ENCODE measurements at regions of chr5 and their contacts with region 1.

Region 1: DNA sequence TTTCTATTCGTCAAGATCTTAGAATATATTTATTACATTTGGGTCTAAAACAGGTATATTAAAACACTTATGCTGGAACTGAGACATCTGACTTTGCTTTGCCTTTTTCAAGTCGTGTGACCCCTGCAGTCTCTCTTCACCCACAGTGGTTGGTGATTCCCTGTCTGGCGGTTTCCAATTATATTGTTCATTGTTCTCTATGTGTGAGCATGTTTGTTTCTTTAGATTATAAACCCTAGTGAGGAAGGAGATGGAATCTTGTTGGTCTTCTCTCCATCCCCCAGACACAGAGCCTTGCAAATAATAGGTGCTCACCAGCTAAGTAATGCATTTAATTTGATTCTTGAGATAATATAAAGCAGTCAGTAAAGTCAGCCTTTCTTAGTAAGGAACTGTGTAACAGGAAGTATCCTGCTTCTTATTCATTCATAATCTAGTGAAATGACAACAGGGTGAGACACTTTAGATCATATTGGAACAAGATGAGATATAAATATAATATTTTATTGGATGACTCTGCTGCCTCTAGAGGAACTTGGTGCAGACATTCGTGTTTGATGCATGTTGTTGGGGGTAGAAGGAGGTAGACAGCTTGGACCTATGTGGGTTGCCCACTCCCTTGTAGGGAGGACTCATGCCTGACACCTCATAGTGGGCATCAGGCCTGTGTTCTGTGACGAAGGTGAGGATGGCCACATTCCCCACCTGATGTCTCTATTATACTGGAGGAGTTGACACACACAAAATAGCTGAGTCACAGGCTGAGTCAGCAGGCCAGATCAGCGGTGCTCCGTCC is 88.1 kb downstream of the FGF1 start:
- DNase-seq: no peak
- ATAC-seq: no peak
- H3K4me3 ChIP-seq: no peak overlapping the region
- H3K27ac ChIP-seq: no peak overlapping the region
- H3K4me1 ChIP-seq: no peaks in the 10 kb centered on the region
- H3K27me3 ChIP-seq: no peaks in the 10 kb centered on the region; a peak in 2 of 4 replicates
- CTCF ChIP-seq: no peak
- EP300 ChIP-seq: no peak
- POLR2A ChIP-seq: no peak
- RAD21 ChIP-seq: no peak

Region 2: GRCh38 chr5:142587354-142587965 is 10.3 kb before region 1 on chr5:
- CTCF ChIA-PET with region 1: interaction called, 20 read pairs
- POLR2A ChIA-PET with region 1: no interaction called
- RAD21 ChIA-PET with region 1: no interaction called
- SMC1A ChIA-PET with region 1: interaction called, 4 read pairs
- in situ Hi-C with region 1: no loop called
- intact Hi-C with region 1: no loop called
- DNase-seq: no peak
- ATAC-seq: no peak; the same call in 2 of the 3 replicates
- H3K4me3 ChIP-seq: no peak overlapping the region
- H3K27ac ChIP-seq: no peak overlapping the region
- H3K4me1 ChIP-seq: no peaks in the 10 kb centered on the region
- H3K27me3 ChIP-seq: no peaks in the 10 kb centered on the region; a peak in 1 of 4 replicates
- CTCF ChIP-seq: peak; percentile 34 to 51 (median 49)
- EP300 ChIP-seq: no peak
- POLR2A ChIP-seq: no peak
- RAD21 ChIP-seq: 0 out of 2 replicates have a peak, but pooled peaks have one; percentile 26

Region 3: DNA sequence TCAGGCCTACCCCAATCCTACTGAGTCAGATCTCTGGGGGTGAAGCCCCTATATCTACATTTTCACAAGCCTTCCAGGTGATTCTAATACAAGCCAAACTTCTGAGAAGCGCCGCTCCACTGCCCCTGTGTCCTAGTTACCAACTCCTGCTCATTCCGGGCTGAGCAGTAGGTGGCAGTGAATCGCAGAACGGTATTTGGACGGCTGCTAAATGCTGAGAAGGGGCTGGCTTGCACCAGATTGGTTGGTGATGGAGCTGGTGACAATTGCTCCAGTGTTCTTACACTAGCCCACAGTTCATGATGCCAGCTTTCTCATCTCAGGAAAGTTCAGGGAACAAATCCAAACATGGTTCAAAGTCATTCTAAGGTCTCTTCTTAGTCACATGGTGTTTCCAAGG is 119.2 kb after region 1 on chr5:
- CTCF ChIA-PET with region 1: no interaction called
- POLR2A ChIA-PET with region 1: no interaction called
- RAD21 ChIA-PET with region 1: no interaction called
- SMC1A ChIA-PET with region 1: no interaction called
- in situ Hi-C with region 1: no loop called
- intact Hi-C with region 1: no loop called
- DNase-seq: no peak
- ATAC-seq: peak; percentile 80
- H3K4me3 ChIP-seq: no peak overlapping the region
- H3K27ac ChIP-seq: no peak overlapping the region
- H3K4me1 ChIP-seq: no peaks in the 10 kb centered on the region
- H3K27me3 ChIP-seq: no peaks in the 10 kb centered on the region; a peak in 1 of 4 replicates
- CTCF ChIP-seq: peak; percentile 51 to 63 (median 55); a peak in 5 of 6 replicates
- EP300 ChIP-seq: no peak
- POLR2A ChIP-seq: no peak
- RAD21 ChIP-seq: peak; percentile 44

Region 4: DNA sequence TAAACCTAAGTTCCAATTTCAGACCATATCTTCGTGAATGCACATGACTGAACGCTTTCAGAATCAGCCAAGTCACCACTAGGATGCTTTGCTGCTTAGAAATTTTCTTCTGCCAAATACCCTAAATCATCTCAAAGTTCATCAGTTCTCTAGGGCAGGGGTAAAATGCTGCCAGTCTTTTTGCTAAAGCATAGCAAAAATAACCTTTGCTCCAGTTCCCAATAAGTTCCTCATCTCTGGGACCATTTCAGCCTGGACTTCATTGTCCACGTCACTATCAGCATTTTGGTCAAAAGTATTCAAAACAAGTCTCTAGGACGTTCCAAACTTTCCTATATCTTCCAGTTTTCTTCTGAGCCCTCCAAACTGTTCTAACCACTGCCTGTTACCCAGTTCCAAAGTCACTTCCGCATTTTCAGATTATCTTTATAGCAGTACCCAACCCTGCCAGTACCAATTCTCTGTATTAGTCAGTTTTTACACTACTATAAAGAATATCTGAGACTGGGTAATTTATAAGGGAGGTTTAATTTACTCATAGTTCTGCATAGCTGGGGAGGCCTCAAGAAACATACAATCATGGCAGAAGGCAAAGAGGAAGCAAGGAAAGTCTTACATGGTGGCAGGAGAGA is 731.0 kb after region 1 on chr5:
- CTCF ChIA-PET with region 1: no interaction called
- POLR2A ChIA-PET with region 1: no interaction called
- RAD21 ChIA-PET with region 1: no interaction called
- SMC1A ChIA-PET with region 1: no interaction called
- in situ Hi-C with region 1: no loop called
- intact Hi-C with region 1: no loop called
- DNase-seq: no peak
- ATAC-seq: peak; percentile 17
- H3K4me3 ChIP-seq: no peak overlapping the region
- H3K27ac ChIP-seq: no peak overlapping the region
- H3K4me1 ChIP-seq: peaks cover 4% of the 10 kb centered on the region
- H3K27me3 ChIP-seq: no peaks in the 10 kb centered on the region
- CTCF ChIP-seq: no peak
- EP300 ChIP-seq: no peak
- POLR2A ChIP-seq: no peak
- RAD21 ChIP-seq: no peak

Measured in GM12878 (cell line).